ENCODE measurements at regions of chr14 and their contacts with region 1.

Region 1: GRCh38 chr14:20413045-20413799 is at the start of gene TEP1:
- H3K4me3 ChIP-seq: peak within 1 kb of the TSS; percentile 85
- H3K27ac ChIP-seq: peak within 1 kb of the TSS; percentile 79
- H3K4me1 ChIP-seq: peaks cover 16% of the 10 kb centered on the region
- CTCF ChIP-seq: no peak

Region 2: GRCh38 chr14:20333494-20333841 is 79.8 kb before region 1 on chr14:
- CTCF ChIA-PET with region 1: no interaction called
- POLR2A ChIA-PET with region 1: no interaction called
- H3K4me3 ChIP-seq: peak overlapping the region; percentile 23
- H3K27ac ChIP-seq: 0 out of 2 replicates have a peak overlapping the region, but pooled peaks have one; percentile 20
- H3K4me1 ChIP-seq: peaks cover 6% of the 10 kb centered on the region
- CTCF ChIP-seq: no peak

Region 3: GRCh38 chr14:20397511-20397910 is 15.7 kb before region 1 on chr14:
- CTCF ChIA-PET with region 1: interaction called, 10 read pairs
- POLR2A ChIA-PET with region 1: no interaction called
- H3K4me3 ChIP-seq: no peak overlapping the region
- H3K27ac ChIP-seq: no peak overlapping the region
- H3K4me1 ChIP-seq: no peaks in the 10 kb centered on the region
- CTCF ChIP-seq: no peak

Region 4: GRCh38 chr14:20427231-20428009 is 14.2 kb after region 1 on chr14:
- CTCF ChIA-PET with region 1: interaction called, 21 read pairs
- POLR2A ChIA-PET with region 1: interaction called, 3 read pairs
- H3K4me3 ChIP-seq: no peak overlapping the region
- H3K27ac ChIP-seq: no peak overlapping the region
- H3K4me1 ChIP-seq: no peaks in the 10 kb centered on the region
- CTCF ChIP-seq: no peak

Region 5: GRCh38 chr14:20454516-20455354 is 41.5 kb after region 1 on chr14 and contains the starts of genes APEX1 and OSGEP:
- CTCF ChIA-PET with region 1: interaction called, 4 read pairs
- POLR2A ChIA-PET with region 1: interaction called, 18 read pairs
- H3K4me3 ChIP-seq: peak within 1 kb of the TSS; percentile 91
- H3K27ac ChIP-seq: peak within 1 kb of the TSS; percentile 87
- H3K4me1 ChIP-seq: no peaks in the 10 kb centered on the region; the same call in none of the 2 replicates
- CTCF ChIP-seq: no peak; the same call in 1 of the 2 replicates

Region 6: GRCh38 chr14:20461274-20462001 is 48.2 kb after region 1 on chr14 and contains the start of gene PIP4P1:
- CTCF ChIA-PET with region 1: interaction called, 10 read pairs
- POLR2A ChIA-PET with region 1: interaction called, 19 read pairs
- H3K4me3 ChIP-seq: peak within 1 kb of the TSS; percentile 85
- H3K27ac ChIP-seq: peak within 1 kb of the TSS; percentile 83
- H3K4me1 ChIP-seq: peaks cover 10% of the 10 kb centered on the region
- CTCF ChIP-seq: no peak

Region 7: DNA sequence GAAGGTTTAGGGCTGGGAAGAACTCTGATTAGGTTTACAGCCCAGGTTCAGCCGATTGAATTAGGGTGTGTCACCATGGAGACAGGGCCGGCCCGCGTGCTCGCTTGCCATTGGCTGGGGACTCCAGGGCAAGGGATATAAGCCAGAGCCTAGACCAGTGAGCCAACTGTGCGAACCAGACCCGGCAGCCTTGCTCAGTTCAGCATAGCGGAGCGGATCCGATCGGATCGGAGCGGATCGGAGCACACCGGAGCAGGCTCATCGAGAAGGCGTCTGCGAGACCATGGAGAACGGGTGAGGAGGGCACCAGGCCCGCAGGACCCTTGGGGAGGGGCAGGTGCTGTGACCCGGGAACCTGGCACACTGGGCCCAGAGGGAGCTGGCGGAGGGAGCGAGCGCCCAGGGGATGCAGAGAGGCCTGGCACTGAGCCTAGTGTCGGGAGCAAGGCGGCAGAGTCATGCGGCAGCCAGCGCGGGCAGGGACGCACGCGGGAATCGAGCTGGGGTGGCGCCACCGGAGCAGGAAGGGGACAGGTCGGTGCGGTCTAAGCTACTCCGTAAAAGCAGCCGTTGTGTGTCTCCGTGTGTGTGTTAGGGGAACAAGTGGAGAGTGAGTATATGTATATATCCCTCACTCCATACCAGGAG is 56.1 kb after region 1 on chr14 and contains the start of gene PNP:
- CTCF ChIA-PET with region 1: interaction called, 7 read pairs
- POLR2A ChIA-PET with region 1: interaction called, 12 read pairs
- H3K4me3 ChIP-seq: peak within 1 kb of the TSS; percentile 71
- H3K27ac ChIP-seq: peak within 1 kb of the TSS; percentile 84
- H3K4me1 ChIP-seq: peaks cover 5% of the 10 kb centered on the region
- CTCF ChIP-seq: peak; percentile 56

Region 8: DNA sequence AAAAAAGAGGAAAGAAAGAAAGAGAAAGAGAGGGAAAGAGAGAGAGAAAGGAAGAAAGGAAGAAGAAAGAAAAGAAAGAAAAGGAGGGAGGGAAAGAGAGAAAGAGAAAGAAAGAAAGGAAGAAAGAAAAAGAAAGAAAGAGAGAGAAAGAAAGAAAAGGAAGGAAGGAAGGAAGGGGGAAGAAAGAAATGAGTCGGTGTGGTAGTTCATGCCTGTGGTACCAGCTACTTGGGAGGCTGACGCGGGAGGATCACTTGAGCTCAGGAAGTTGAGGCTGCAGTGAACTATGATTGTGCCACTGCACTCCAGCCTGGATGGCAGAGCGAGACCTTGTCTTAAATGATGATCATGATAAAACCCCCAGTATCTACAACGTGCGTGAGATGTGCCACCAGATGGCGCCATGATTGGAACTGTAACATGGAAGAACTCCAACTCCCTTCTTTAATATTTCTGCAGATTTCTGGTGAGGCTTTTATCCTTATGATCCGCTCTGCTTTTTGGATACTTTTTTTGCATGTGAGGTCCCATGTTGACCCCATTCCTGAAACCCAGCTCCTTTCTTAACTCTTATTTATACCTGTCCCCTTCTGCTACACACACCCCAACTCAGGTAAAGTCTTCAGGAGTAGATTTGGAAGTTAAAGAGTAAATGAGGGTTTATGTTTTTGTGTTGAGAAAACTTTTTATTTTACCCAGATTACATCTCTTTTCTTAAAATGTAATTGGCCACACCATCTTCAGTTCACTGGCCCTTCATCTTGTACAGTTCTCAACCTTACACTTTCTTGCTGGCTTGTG is 117.7 kb after region 1 on chr14:
- CTCF ChIA-PET with region 1: interaction called, 3 read pairs
- POLR2A ChIA-PET with region 1: interaction called, 10 read pairs
- H3K4me3 ChIP-seq: no peak overlapping the region
- H3K27ac ChIP-seq: no peak overlapping the region
- H3K4me1 ChIP-seq: no peaks in the 10 kb centered on the region
- CTCF ChIP-seq: peak; percentile 55

Measured in HEK293 (cell line).